ENCODE measurements at regions of chr1 and their contacts with region 1.

Region 1: GRCh38 chr1:154558575-154559465 is at the start of gene UBE2Q1:
- DNase-seq: peak; percentile 96 to 100 (median 100)
- H3K4me3 ChIP-seq: peak within 1 kb of the TSS; percentile 64 to 97 (median 81)
- H3K4me3 Mint-ChIP-seq: peak within 1 kb of the TSS; percentile 86 to 96
- H3K27ac ChIP-seq: peak within 1 kb of the TSS; percentile 85 to 92
- H3K27ac Mint-ChIP-seq: peak within 1 kb of the TSS; percentile 88 to 99 (median 96)
- H3K4me1 ChIP-seq: peaks cover 26 to 27% of the 10 kb centered on the region in 2 donors
- H3K4me1 Mint-ChIP-seq: peaks cover 29% of the 10 kb centered on the region
- H3K27me3 ChIP-seq: no peaks in the 10 kb centered on the region
- H3K27me3 Mint-ChIP-seq: peaks cover 0 to 2% (median under 1%) of the 10 kb centered on the region in 3 donors
- CTCF ChIP-seq: no peak
- polyA plus RNA-seq, gene UBE2Q1: 6.4 to 22.6 (median 8.4) TPM

Region 2: DNA sequence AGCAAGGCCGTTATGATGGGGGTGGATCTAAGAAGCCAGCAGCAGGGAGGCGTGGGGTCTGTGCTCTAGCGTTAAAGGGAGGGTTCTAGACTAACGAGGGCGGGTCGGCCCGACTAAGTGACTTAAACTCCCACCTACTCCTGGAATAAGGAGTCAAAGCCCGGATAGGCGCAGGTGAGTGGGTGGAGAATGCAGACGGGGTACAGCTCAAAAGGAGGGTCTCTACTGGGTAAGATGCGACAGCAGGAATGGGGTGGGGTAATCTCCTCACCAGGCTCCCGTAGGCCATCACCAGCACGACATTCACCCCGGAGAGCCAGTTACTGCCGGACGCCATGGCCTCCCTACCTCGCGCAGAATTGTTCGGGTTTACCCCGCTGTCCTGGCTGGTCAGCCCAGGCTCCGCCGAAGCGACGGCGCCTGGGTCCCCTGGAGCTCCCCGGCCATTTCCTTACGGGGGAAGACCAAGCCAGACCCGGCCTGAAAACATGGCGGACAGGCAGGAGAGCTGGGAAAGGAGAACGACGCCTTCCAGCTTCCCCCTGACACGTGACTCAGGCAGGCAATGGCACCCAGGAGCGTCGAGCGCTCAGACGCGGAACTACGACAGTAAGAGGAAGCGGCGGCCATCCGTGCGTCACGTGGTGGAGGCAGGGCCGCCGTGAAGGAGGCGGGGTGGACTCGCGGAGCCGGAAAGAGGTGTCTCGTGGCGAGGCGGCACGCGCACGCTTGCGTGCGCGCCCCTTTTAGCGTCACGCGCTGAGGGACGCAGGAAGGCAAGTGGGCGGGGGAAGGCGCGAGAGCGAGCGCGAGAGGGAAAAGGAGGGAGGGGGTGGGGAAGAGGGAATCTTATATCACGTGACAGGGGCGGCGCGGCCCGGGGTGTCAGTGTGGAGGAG is 338.5 kb before region 1 on chr1 and contains the start of gene UBAP2L:
- intact Hi-C with region 1: loop called in 1 of 2 experiments (anchors 5 kb)
- DNase-seq: peak; percentile 98 to 100 (median 100)
- H3K4me3 ChIP-seq: peak within 1 kb of the TSS; percentile 92 to 97 (median 96)
- H3K4me3 Mint-ChIP-seq: peak within 1 kb of the TSS; percentile 82 to 97
- H3K27ac ChIP-seq: peak within 1 kb of the TSS; percentile 100
- H3K27ac Mint-ChIP-seq: peak within 1 kb of the TSS; percentile 99 to 100 (median 99)
- H3K4me1 ChIP-seq: peaks cover 31 to 36% of the 10 kb centered on the region in 2 donors
- H3K4me1 Mint-ChIP-seq: peaks cover 46% of the 10 kb centered on the region
- H3K27me3 ChIP-seq: no peaks in the 10 kb centered on the region
- H3K27me3 Mint-ChIP-seq: peaks cover 0 to 5% (median 2%) of the 10 kb centered on the region in 3 donors
- CTCF ChIP-seq: no peak
- polyA plus RNA-seq, gene UBAP2L: 40.1 to 200 (median 46.8) TPM

Region 3: DNA sequence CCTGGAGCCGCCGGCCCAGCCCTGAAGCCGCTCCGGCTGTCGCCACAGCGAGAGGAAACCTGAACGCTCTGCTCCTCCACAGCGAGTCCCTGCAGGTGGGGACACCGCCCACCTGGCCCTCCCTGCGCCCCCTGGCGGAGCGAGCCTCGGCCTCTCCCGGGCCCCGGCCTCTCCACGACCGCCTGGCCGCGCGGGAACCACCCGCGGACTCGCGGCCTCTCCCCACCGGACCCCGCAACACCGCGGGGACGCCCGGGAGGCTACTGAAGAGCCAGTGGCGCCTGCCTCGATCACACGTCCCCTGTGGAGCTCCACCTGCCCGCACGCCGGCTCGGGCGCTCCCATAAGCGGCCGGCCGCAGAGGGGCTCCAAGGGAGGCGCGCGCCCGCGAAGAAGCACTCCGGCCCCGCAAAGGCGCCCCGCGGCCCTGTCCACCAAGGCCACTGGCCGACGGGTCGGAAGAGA is 201.7 kb after region 1 on chr1:
- intact Hi-C with region 1: loop called in 1 of 2 experiments (anchors 5 kb)
- DNase-seq: peak; percentile 33 to 52 (median 36)
- H3K4me3 ChIP-seq: peak overlapping the region in 1 of 3 experiments; percentile 65
- H3K4me3 Mint-ChIP-seq: peak overlapping the region in 1 of 2 donors; percentile 65
- H3K27ac ChIP-seq: no peak overlapping the region
- H3K27ac Mint-ChIP-seq: no peak overlapping the region
- H3K4me1 ChIP-seq: peaks cover 8 to 9% of the 10 kb centered on the region in 2 donors
- H3K4me1 Mint-ChIP-seq: peaks cover 7% of the 10 kb centered on the region
- H3K27me3 ChIP-seq: peaks cover 35 to 63% of the 10 kb centered on the region in 2 donors
- H3K27me3 Mint-ChIP-seq: peaks cover 46 to 66% (median 50%) of the 10 kb centered on the region in 3 donors
- CTCF ChIP-seq: peak; percentile 81

Region 4: DNA sequence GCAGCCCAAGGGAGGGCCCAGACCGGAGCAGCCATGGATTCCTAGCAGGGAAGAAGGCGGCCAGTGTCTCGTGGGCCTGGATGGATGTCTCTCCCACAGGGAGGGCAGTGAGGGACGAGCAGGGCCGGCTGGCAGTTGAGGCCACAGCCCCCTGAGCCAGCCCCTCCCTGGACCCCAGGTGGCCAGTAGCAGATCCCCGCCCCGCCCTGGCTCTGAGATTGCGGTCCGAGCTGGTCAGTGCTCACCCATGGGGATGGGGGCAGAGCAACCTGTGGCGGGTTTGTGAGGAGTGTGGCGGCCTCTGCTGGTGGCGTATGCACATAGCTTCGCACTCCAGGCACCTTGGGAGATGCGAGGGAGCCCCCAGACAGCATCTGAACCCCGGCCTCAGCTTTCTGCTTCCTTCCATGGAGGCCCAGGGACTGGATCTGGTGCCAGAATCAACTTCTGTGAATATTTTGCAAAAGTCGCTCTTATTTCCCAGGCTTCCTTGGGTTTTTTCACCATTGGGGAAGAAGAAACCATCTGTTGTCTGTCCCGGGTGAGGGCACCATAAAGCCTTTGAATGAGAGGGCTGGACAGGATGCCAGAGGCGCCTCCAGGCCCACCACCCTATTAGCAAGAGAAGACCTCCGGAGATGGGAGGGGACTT is 319.7 kb after region 1 on chr1:
- intact Hi-C with region 1: loop called (anchors 2 to 5 kb)
- DNase-seq: peak; percentile 50 to 63 (median 55)
- H3K4me3 ChIP-seq: no peak overlapping the region
- H3K4me3 Mint-ChIP-seq: no peak overlapping the region
- H3K27ac ChIP-seq: no peak overlapping the region
- H3K27ac Mint-ChIP-seq: no peak overlapping the region
- H3K4me1 ChIP-seq: no peaks in the 10 kb centered on the region
- H3K4me1 Mint-ChIP-seq: no peaks in the 10 kb centered on the region
- H3K27me3 ChIP-seq: no peaks in the 10 kb centered on the region
- H3K27me3 Mint-ChIP-seq: peaks cover 2 to 11% (median 3%) of the 10 kb centered on the region in 3 donors
- CTCF ChIP-seq: peak; percentile 76

Region 5: GRCh38 chr1:155084722-155085503 is 526.1 kb after region 1 on chr1:
- intact Hi-C with region 1: loop called in 1 of 2 experiments (anchors 10 kb)
- DNase-seq: peak; percentile 84 to 88 (median 86)
- H3K4me3 ChIP-seq: peak overlapping the region; percentile 67 to 96 (median 75)
- H3K4me3 Mint-ChIP-seq: peak overlapping the region; percentile 95 to 97
- H3K27ac ChIP-seq: peak overlapping the region; percentile 71 to 77
- H3K27ac Mint-ChIP-seq: peak overlapping the region; percentile 92 to 98 (median 98)
- H3K4me1 ChIP-seq: peaks cover 50 to 59% of the 10 kb centered on the region in 2 donors
- H3K4me1 Mint-ChIP-seq: peaks cover 40% of the 10 kb centered on the region
- H3K27me3 ChIP-seq: peaks cover 37 to 45% of the 10 kb centered on the region in 2 donors
- H3K27me3 Mint-ChIP-seq: peaks cover 35 to 46% (median 44%) of the 10 kb centered on the region in 3 donors
- CTCF ChIP-seq: peak; percentile 93

Region 6: DNA sequence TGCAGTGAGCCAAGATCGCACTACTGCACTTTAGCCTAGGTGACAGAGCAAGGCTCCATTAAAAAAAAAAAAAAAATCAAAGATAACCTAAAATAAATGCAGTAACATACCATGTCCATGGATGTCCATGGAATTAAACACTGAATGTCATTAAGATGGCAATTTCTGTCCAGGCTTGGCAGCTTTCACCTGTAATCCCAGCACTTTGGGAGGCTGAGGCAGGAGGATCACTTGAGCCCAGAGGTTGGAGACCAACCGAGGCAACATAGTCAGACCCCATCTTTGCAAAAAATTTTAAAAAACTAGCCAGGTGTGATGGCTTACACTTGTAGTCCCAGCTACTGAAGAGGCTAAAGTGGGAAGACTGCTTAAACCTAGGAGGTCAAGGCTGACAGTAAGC is 862.0 kb after region 1 on chr1:
- intact Hi-C with region 1: no loop called
- DNase-seq: no peak
- H3K4me3 ChIP-seq: no peak overlapping the region
- H3K4me3 Mint-ChIP-seq: no peak overlapping the region
- H3K27ac ChIP-seq: no peak overlapping the region
- H3K27ac Mint-ChIP-seq: peak overlapping the region in 1 of 7 donors; percentile 32
- H3K4me1 ChIP-seq: no peaks in the 10 kb centered on the region
- H3K4me1 Mint-ChIP-seq: no peaks in the 10 kb centered on the region
- H3K27me3 ChIP-seq: no peaks in the 10 kb centered on the region
- H3K27me3 Mint-ChIP-seq: no peaks in the 10 kb centered on the region
- CTCF ChIP-seq: no peak

Measured in CD14-positive monocyte (primary cell).